Activated CD8-positive, alpha-beta T cell treated with anti-CD3 and anti-CD28 coated beads for 36 hours (primary cell): ENCODE measurements at regions of chr3 and their contacts with region 1.

Region 1: DNA sequence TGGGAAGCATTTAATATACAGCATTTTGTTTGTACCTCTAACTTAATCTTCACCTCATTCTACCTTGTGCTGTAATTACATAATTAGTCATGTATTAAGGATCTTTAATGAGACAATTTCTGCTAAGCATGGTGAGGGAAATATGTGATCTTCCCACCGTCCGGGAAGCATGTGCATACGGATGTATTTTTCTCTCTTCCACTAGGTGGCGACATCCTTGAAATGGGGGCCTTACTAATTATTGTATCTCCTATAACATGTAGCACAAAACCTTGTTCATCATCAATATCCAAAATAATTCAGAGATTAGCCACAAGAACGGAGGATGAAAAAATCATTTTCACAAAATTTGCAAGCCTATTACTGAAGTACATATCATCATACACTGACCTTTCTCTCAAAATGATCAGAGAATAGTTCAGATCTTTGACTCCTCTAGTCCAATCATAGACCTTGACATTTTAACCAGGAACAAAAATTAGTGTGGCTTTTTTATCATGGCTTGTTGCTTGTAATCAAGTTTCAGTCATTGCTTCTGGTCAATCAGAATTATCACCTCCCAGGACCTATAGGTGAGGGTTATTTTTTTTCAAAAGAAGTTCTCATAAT is 148.9 kb upstream of the GBE1 start:
- DNase-seq: peak; percentile 19
- ATAC-seq: peak; percentile 61
- H3K4me3 Mint-ChIP-seq: no peak overlapping the region
- H3K27ac Mint-ChIP-seq: no peak overlapping the region
- H3K4me1 Mint-ChIP-seq: no peaks in the 10 kb centered on the region
- H3K27me3 Mint-ChIP-seq: peaks cover 3% of the 10 kb centered on the region
- CTCF ChIP-seq: peak; percentile 90

Region 2: GRCh38 chr3:81898336-81898735 is 12.0 kb before region 1 on chr3:
- CTCF ChIA-PET with region 1: interaction called, 31 read pairs
- POLR2A ChIA-PET with region 1: no interaction called
- intact Hi-C with region 1: no loop called
- DNase-seq: no peak
- ATAC-seq: no peak
- H3K4me3 Mint-ChIP-seq: no peak overlapping the region
- H3K27ac Mint-ChIP-seq: no peak overlapping the region
- H3K4me1 Mint-ChIP-seq: no peaks in the 10 kb centered on the region
- H3K27me3 Mint-ChIP-seq: no peaks in the 10 kb centered on the region
- CTCF ChIP-seq: no peak

Region 3: GRCh38 chr3:81920816-81921215 is 10.5 kb after region 1 on chr3:
- CTCF ChIA-PET with region 1: interaction called, 15 read pairs
- POLR2A ChIA-PET with region 1: interaction called, 3 read pairs
- intact Hi-C with region 1: no loop called
- DNase-seq: no peak
- ATAC-seq: no peak
- H3K4me3 Mint-ChIP-seq: no peak overlapping the region
- H3K27ac Mint-ChIP-seq: no peak overlapping the region
- H3K4me1 Mint-ChIP-seq: no peaks in the 10 kb centered on the region
- H3K27me3 Mint-ChIP-seq: peaks cover 4% of the 10 kb centered on the region
- CTCF ChIP-seq: no peak

Region 4: GRCh38 chr3:81936817-81937216 is 26.5 kb after region 1 on chr3:
- CTCF ChIA-PET with region 1: interaction called, 13 read pairs
- POLR2A ChIA-PET with region 1: no interaction called
- intact Hi-C with region 1: no loop called
- DNase-seq: no peak
- ATAC-seq: no peak
- H3K4me3 Mint-ChIP-seq: no peak overlapping the region
- H3K27ac Mint-ChIP-seq: no peak overlapping the region
- H3K4me1 Mint-ChIP-seq: no peaks in the 10 kb centered on the region
- H3K27me3 Mint-ChIP-seq: no peaks in the 10 kb centered on the region
- CTCF ChIP-seq: no peak

Region 5: GRCh38 chr3:81947359-81947758 is 37.0 kb after region 1 on chr3:
- CTCF ChIA-PET with region 1: no interaction called
- POLR2A ChIA-PET with region 1: no interaction called
- intact Hi-C with region 1: no loop called
- DNase-seq: no peak
- ATAC-seq: no peak
- H3K4me3 Mint-ChIP-seq: no peak overlapping the region
- H3K27ac Mint-ChIP-seq: no peak overlapping the region
- H3K4me1 Mint-ChIP-seq: no peaks in the 10 kb centered on the region
- H3K27me3 Mint-ChIP-seq: peaks cover 2% of the 10 kb centered on the region
- CTCF ChIP-seq: no peak

Region 6: DNA sequence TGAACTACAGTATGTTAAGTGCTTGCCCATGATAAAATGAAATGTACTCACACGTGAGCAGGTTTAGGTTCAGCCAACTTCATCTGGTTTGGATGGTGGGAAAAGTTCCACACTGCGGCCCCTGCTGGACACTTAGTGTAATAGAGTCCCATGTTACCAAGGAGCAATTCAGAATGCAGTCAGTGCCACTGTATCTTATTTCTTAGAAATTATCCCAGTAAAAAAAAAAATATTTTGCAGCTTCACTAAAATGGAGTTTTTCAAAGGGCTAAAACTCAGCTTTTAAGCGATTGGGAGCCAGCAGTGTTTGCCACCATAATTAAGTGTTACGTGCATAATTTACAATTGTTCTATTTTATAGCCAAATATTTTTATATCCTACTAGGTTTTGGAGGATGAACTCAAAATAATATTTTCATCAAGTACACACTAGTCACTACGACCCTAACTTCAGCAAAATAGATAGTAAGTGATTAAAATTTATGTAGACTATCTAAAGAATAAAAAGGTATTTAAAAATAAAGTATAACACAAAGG is 222.8 kb after region 1 on chr3:
- CTCF ChIA-PET with region 1: interaction called, 10 read pairs
- POLR2A ChIA-PET with region 1: no interaction called
- intact Hi-C with region 1: no loop called
- DNase-seq: peak; percentile 68
- ATAC-seq: peak; percentile 81
- H3K4me3 Mint-ChIP-seq: no peak overlapping the region
- H3K27ac Mint-ChIP-seq: no peak overlapping the region
- H3K4me1 Mint-ChIP-seq: no peaks in the 10 kb centered on the region
- H3K27me3 Mint-ChIP-seq: peaks cover 2% of the 10 kb centered on the region
- CTCF ChIP-seq: peak; percentile 83

Region 7: GRCh38 chr3:83438188-83438587 is 1527.8 kb after region 1 on chr3:
- CTCF ChIA-PET with region 1: no interaction called
- POLR2A ChIA-PET with region 1: no interaction called
- intact Hi-C with region 1: no loop called
- DNase-seq: no peak
- ATAC-seq: no peak
- H3K4me3 Mint-ChIP-seq: no peak overlapping the region
- H3K27ac Mint-ChIP-seq: no peak overlapping the region
- H3K4me1 Mint-ChIP-seq: no peaks in the 10 kb centered on the region
- H3K27me3 Mint-ChIP-seq: no peaks in the 10 kb centered on the region
- CTCF ChIP-seq: no peak